CD8-positive, alpha-beta memory T cell (primary cell): ENCODE measurements at regions of chr9 and their contacts with region 1.

Region 1: DNA sequence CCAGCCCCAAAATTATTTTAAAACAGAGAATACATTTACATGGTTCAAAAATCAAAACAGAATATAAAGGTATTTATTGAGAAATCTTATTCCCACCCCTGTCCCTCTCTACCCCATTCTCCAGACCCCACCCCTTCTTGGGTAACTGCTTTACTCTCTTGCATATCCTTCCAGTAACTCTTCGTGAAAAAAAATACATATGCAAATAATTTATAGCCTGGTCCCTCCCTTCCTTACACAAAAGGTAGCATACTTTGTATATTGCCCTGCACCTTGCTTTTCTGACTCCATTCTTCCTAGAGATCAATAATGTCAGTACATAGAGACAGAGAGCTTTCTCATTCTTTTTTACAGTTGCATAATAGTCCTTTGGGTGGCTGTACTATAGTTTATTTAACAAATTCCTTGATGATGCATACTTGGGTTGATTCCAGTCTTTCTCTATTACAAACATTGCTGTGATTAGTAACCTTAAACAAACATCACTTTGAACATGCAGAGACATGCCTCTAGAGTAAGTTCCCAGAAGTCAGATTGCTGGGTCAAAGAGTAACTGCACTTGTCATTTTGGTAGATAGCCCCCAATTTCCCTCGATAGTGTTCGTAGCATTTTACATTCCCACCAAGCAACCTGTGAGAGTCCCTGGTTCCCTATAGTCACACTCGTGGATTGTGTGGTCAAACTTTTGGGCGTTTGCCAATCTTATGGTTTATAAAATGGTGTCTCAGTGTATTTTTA is 47.8 kb downstream of the STOM start:
- DNase-seq: no peak
- H3K4me3 ChIP-seq: no peak overlapping the region
- H3K4me3 Mint-ChIP-seq: peak overlapping the region in 1 of 7 donors; percentile 13
- H3K27ac ChIP-seq: no peak overlapping the region
- H3K27ac Mint-ChIP-seq: peak overlapping the region in 2 of 8 donors; percentile 8 to 10
- H3K4me1 ChIP-seq: peaks cover 13% of the 10 kb centered on the region
- H3K4me1 Mint-ChIP-seq: peaks cover 29 to 43% (median 34%) of the 10 kb centered on the region in 3 donors
- H3K27me3 ChIP-seq: no peaks in the 10 kb centered on the region
- H3K27me3 Mint-ChIP-seq: no peaks in the 10 kb centered on the region

Region 2: DNA sequence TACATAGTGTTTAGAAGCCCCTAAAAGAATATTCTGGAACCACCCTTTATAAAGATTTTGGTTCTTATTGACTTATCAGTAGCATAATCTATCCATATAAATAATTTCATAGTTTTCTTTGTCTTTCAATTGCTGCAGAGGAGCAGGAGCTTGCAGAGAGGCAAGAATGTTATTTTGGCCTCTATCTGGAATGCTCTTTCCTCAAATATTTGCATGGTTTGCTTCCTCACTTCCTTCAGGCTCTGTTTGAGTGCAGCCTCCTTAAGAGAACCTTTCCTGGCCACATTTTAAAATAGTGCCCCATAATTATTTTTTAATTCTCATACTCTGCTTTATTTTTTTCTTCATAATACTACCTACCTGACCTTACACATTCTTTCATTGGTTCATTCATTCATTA is 273.6 kb before region 1 on chr9:
- CTCF ChIA-PET with region 1: no interaction called
- POLR2A ChIA-PET with region 1: no interaction called
- DNase-seq: no peak
- H3K4me3 ChIP-seq: no peak overlapping the region
- H3K4me3 Mint-ChIP-seq: no peak overlapping the region
- H3K27ac ChIP-seq: no peak overlapping the region
- H3K27ac Mint-ChIP-seq: no peak overlapping the region
- H3K4me1 ChIP-seq: no peaks in the 10 kb centered on the region
- H3K4me1 Mint-ChIP-seq: no peaks in the 10 kb centered on the region
- H3K27me3 ChIP-seq: no peaks in the 10 kb centered on the region
- H3K27me3 Mint-ChIP-seq: no peaks in the 10 kb centered on the region

Region 3: DNA sequence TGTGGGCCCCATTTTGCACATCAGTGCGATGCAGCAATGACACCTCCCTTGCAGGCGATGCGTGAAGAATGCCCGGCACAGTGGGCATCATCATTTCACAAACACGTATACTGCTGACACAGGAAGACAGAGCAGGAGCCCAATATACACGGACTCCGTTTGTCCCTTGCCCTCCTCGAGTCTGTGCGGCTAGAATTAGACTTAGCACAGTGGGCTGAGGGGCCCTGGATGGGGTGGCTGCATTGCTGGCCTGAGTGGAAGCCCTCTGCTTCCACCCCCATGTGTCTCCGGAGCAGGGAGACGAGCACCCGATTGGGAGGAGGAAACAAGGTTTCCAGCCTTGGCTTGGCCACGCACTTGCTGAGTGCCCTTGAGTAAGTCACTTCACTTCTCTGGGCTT is 13.4 kb before region 1 on chr9:
- CTCF ChIA-PET with region 1: interaction called, 15 read pairs
- POLR2A ChIA-PET with region 1: no interaction called
- DNase-seq: no peak
- H3K4me3 ChIP-seq: no peak overlapping the region
- H3K4me3 Mint-ChIP-seq: no peak overlapping the region
- H3K27ac ChIP-seq: no peak overlapping the region
- H3K27ac Mint-ChIP-seq: no peak overlapping the region
- H3K4me1 ChIP-seq: no peaks in the 10 kb centered on the region
- H3K4me1 Mint-ChIP-seq: no peaks in the 10 kb centered on the region
- H3K27me3 ChIP-seq: no peaks in the 10 kb centered on the region
- H3K27me3 Mint-ChIP-seq: peaks cover 0 to 2% of the 10 kb centered on the region in 2 donors

Region 4: GRCh38 chr9:121350993-121351561 is 28.9 kb after region 1 on chr9:
- CTCF ChIA-PET with region 1: interaction called, 32 read pairs
- POLR2A ChIA-PET with region 1: no interaction called
- DNase-seq: no peak
- H3K4me3 ChIP-seq: no peak overlapping the region
- H3K4me3 Mint-ChIP-seq: peak overlapping the region in 1 of 7 donors; percentile 4
- H3K27ac ChIP-seq: no peak overlapping the region
- H3K27ac Mint-ChIP-seq: peak overlapping the region in 1 of 8 donors; percentile 7
- H3K4me1 ChIP-seq: peaks cover 51% of the 10 kb centered on the region
- H3K4me1 Mint-ChIP-seq: peaks cover 58 to 77% (median 74%) of the 10 kb centered on the region in 3 donors
- H3K27me3 ChIP-seq: no peaks in the 10 kb centered on the region
- H3K27me3 Mint-ChIP-seq: no peaks in the 10 kb centered on the region

Region 5: DNA sequence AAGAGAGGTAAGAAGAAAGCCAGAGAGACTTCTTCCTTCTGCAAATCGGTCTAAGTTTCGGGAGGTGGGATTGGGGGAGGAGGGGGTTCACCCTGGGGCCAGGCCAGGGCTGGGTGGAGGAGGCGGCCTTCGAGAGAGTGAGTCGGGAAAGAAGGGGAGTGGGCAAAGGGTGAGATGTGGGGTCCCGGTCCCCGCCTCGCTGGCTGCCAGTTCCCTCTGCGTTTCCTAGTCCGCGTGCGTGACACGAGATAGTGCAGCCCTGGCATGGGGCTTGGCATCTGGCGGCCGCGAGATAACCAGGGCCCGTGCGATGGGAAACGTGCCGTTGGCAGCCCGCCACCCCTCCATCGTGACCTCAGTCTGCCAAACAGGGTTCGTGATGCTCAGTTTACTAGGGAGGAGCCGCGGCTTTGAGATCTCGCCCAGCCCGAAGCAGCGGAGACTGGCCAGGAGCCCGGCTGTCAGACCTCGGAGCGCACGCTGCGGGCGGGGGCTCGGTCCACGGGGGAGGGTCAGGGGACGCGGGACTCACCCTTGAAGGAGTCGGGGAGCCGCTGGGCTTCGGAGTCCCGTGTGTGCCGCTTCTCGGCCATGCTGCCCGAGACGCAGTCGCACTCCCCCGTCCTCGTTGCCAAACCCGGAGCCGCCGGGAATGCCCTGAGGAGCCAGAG is 47.5 kb after region 1 on chr9 and contains the start of gene STOM:
- CTCF ChIA-PET with region 1: interaction called, 204 read pairs
- POLR2A ChIA-PET with region 1: interaction called, 6 read pairs
- DNase-seq: peak in 4 of 5 donors; percentile 58 to 88 (median 70)
- H3K4me3 ChIP-seq: peak within 1 kb of the TSS; percentile 86
- H3K4me3 Mint-ChIP-seq: peak within 1 kb of the TSS; percentile 92 to 99 (median 95)
- H3K27ac ChIP-seq: peak within 1 kb of the TSS; percentile 83
- H3K27ac Mint-ChIP-seq: peak within 1 kb of the TSS; percentile 93 to 98 (median 96)
- H3K4me1 ChIP-seq: peaks cover 37% of the 10 kb centered on the region
- H3K4me1 Mint-ChIP-seq: peaks cover 64 to 75% (median 74%) of the 10 kb centered on the region in 3 donors
- H3K27me3 ChIP-seq: no peaks in the 10 kb centered on the region
- H3K27me3 Mint-ChIP-seq: peaks cover 0 to 2% of the 10 kb centered on the region in 2 donors
- total RNA-seq, gene STOM: 63.0 to 67.3 TPM

Region 6: GRCh38 chr9:121383715-121384114 is 61.5 kb after region 1 on chr9:
- CTCF ChIA-PET with region 1: interaction called, 204 read pairs
- POLR2A ChIA-PET with region 1: no interaction called
- DNase-seq: no peak
- H3K4me3 ChIP-seq: no peak overlapping the region
- H3K4me3 Mint-ChIP-seq: no peak overlapping the region
- H3K27ac ChIP-seq: no peak overlapping the region
- H3K27ac Mint-ChIP-seq: no peak overlapping the region
- H3K4me1 ChIP-seq: no peaks in the 10 kb centered on the region
- H3K4me1 Mint-ChIP-seq: no peaks in the 10 kb centered on the region
- H3K27me3 ChIP-seq: no peaks in the 10 kb centered on the region
- H3K27me3 Mint-ChIP-seq: peaks cover 0 to 2% of the 10 kb centered on the region in 2 donors

Region 7: GRCh38 chr9:121566481-121567465 is 244.6 kb after region 1 on chr9:
- CTCF ChIA-PET with region 1: no interaction called
- POLR2A ChIA-PET with region 1: no interaction called
- DNase-seq: no peak
- H3K4me3 ChIP-seq: no peak overlapping the region
- H3K4me3 Mint-ChIP-seq: no peak overlapping the region
- H3K27ac ChIP-seq: no peak overlapping the region
- H3K27ac Mint-ChIP-seq: no peak overlapping the region
- H3K4me1 ChIP-seq: no peaks in the 10 kb centered on the region
- H3K4me1 Mint-ChIP-seq: no peaks in the 10 kb centered on the region
- H3K27me3 ChIP-seq: no peaks in the 10 kb centered on the region
- H3K27me3 Mint-ChIP-seq: peaks cover 11 to 27% of the 10 kb centered on the region in 2 donors